ENCODE measurements at regions of chr1 and their contacts with region 1.

Region 1: DNA sequence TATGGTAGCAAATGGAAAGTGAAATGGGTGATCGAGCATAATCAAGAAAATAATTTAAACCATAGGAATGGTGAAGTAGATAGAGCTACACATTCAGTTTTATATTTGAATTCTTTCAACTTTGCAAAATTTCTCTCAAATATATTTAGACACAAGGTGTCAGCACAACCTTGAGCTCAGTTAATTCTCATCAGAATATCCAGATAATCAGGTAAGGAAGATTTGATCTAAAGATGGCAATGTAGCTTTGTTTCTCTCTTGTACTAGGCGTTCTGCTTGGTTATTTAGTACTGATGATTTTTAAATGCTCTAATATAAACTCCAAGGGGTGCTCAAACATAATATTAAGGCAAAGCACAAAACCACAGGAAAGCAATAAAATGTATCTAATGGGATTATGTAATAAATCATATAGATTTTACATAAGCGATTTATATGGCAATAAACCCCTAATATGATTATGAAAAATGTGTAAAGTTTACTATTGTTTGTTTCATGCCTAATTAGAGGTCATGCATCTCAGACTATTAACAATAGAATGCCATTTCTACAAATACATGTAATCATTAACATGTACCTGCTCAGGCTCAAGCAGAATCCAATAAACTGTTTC is 32.4 kb upstream of the SERTAD4 start:
- DNase-seq: no peak
- H3K4me3 ChIP-seq: no peak overlapping the region
- H3K27ac ChIP-seq: no peak overlapping the region
- H3K4me1 ChIP-seq: no peaks in the 10 kb centered on the region
- H3K27me3 ChIP-seq: no peaks in the 10 kb centered on the region
- CTCF ChIP-seq: peak; percentile 32 to 41 (median 35)
- EP300 ChIP-seq: no peak
- POLR2A ChIP-seq: no peak

Region 2: DNA sequence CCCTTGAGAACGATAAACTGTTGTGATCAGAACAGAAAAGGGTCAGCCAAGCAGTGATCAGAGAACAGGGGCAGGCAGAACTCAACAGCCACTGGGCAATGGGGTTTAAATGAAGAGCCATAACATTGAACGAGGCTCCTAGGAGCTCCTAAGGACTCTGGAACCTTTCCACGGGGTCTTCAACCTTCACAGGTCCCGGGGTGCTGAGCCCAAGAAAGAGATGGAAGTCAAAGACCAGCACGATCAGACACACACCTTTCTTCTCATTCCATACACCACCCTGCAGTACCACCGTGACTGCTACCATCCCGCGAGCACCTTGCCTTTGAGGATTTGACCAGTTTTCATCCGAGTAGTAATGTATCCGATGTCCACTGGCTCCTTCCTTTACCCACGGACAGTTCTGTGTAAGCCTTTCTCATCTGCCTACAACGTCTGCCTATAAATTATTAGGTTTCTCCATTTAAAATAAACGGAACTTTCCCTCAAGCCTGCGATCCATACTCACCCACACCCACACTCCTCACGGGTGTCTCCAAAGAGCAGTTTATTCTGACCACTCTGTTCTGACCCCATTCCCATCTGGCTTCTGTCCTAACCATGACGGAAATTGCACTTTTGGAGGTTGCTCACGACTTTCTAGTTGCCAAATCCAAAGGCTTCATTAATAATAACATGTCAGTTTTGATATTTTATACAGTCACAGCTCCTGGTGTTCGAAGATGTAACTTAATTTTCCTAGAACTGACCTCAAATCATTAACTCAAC is 111.7 kb after region 1 on chr1:
- intact Hi-C with region 1: loop called (anchors 2 kb)
- DNase-seq: no peak
- H3K4me3 ChIP-seq: peak overlapping the region; percentile 44 to 55 (median 48)
- H3K27ac ChIP-seq: peak overlapping the region; percentile 59 to 79 (median 66)
- H3K4me1 ChIP-seq: peaks cover 11 to 17% (median 16%) of the 10 kb centered on the region in 4 donors
- H3K27me3 ChIP-seq: peaks cover 0 to 4% (median 0%) of the 10 kb centered on the region in 4 donors
- CTCF ChIP-seq: no peak
- EP300 ChIP-seq: no peak
- POLR2A ChIP-seq: no peak